Activated CD4-positive, alpha-beta memory T cell treated with anti-CD3 and anti-CD28 coated beads for 36 hours (primary cell): ENCODE measurements at regions of chr18 and their contacts with region 1.

Region 1: DNA sequence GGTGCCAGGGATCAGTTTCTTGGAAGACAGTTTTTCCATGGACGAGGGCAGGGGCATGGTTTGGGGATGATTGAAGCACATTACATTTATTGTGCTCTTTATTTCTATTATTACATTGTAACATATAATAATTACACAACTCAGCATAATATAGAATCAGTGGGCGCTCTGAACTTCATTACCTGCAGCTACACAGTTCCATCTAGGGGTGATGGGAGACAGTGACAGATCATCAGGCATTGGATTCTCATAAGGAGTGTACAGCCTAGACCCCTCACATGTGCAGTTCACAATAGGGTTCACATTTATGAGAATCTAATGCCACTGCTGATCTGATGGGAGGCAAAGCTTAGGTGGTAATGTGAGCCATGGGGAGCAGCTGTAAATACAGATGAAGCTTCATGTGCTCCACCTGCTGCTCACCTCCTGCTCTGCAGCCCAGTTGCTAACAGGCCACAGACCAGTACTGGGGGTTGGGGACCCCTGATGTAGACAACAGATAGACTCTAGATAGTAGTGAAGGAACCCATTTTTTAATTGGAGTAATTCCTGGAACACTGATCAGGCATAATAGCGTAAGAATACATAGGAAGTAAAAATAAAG is 41.5 kb upstream of the MC4R start:
- DNase-seq: no peak
- H3K4me3 Mint-ChIP-seq: no peak overlapping the region
- H3K27ac Mint-ChIP-seq: no peak overlapping the region
- H3K4me1 Mint-ChIP-seq: no peaks in the 10 kb centered on the region
- H3K27me3 Mint-ChIP-seq: no peaks in the 10 kb centered on the region

Region 2: GRCh38 chr18:59996370-59996966 is 417.6 kb before region 1 on chr18:
- CTCF ChIA-PET with region 1: no interaction called
- POLR2A ChIA-PET with region 1: no interaction called
- intact Hi-C with region 1: loop called (anchors 10 kb)
- DNase-seq: peak; percentile 24
- H3K4me3 Mint-ChIP-seq: no peak overlapping the region
- H3K27ac Mint-ChIP-seq: no peak overlapping the region
- H3K4me1 Mint-ChIP-seq: no peaks in the 10 kb centered on the region
- H3K27me3 Mint-ChIP-seq: peaks cover 19% of the 10 kb centered on the region